ENCODE measurements at regions of chr6 and their contacts with region 1.

Region 1: DNA sequence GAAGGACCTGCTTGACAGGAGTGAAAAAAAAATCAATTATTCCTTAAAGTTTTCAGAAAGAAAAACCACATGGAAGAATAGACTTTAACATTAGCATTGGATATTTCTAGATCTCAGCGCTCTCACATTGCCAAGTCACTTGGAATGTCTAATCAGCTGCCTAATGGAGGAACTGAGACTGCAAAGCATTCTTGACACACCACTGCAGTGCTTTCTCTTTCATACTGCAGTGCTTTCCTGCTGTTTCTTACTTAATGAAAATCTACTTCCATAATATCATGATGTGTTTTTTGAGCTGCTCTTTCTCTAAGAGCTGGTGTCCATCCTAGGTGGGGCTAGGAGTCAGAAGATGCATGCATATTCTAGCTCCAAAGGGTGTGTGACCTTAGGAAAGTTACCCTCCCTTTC is 20.4 kb upstream of the MCM3 start:
- DNase-seq: no peak
- H3K4me3 Mint-ChIP-seq: no peak overlapping the region
- H3K27ac Mint-ChIP-seq: peak overlapping the region; percentile 75
- H3K4me1 Mint-ChIP-seq: peaks cover 42% of the 10 kb centered on the region
- H3K27me3 Mint-ChIP-seq: no peaks in the 10 kb centered on the region
- CTCF ChIP-seq: no peak

Region 2: DNA sequence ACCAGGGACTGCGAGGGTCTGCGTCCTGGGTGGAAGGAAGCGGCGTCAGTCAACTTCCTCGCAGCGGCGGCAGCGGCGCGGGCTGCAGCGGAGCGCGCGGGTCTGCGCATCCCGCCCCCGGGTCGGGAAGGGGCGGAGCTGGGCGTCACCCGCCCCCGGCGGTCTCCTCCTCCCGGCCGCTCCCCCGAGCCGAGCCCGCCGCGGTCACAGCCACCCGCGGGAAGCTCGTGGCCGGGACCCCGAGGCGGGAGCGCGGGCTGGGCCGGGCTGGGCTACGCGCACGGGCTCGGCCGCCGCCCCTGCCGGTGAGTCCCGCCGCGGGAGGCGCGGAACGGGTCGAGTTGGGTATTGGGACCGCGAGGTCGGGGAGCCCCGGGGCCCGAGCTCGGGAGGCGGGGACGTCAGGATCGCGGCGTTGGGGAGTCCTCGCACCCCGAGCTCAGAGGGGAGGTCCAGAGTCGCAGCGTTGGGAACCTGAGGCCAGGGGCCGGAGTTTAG is 57.0 kb after region 1 on chr6 and contains the start of gene PAQR8:
- CTCF ChIA-PET with region 1: interaction called, 3 read pairs
- intact Hi-C with region 1: loop called (anchors 5 kb)
- DNase-seq: peak; percentile 79
- H3K4me3 Mint-ChIP-seq: peak within 1 kb of the TSS; percentile 100
- H3K27ac Mint-ChIP-seq: peak within 1 kb of the TSS; percentile 95
- H3K4me1 Mint-ChIP-seq: peaks cover 34% of the 10 kb centered on the region
- H3K27me3 Mint-ChIP-seq: no peaks in the 10 kb centered on the region
- CTCF ChIP-seq: no peak
- total RNA-seq, gene PAQR8: 16.1 and 16.3 TPM in 2 replicates

Region 3: DNA sequence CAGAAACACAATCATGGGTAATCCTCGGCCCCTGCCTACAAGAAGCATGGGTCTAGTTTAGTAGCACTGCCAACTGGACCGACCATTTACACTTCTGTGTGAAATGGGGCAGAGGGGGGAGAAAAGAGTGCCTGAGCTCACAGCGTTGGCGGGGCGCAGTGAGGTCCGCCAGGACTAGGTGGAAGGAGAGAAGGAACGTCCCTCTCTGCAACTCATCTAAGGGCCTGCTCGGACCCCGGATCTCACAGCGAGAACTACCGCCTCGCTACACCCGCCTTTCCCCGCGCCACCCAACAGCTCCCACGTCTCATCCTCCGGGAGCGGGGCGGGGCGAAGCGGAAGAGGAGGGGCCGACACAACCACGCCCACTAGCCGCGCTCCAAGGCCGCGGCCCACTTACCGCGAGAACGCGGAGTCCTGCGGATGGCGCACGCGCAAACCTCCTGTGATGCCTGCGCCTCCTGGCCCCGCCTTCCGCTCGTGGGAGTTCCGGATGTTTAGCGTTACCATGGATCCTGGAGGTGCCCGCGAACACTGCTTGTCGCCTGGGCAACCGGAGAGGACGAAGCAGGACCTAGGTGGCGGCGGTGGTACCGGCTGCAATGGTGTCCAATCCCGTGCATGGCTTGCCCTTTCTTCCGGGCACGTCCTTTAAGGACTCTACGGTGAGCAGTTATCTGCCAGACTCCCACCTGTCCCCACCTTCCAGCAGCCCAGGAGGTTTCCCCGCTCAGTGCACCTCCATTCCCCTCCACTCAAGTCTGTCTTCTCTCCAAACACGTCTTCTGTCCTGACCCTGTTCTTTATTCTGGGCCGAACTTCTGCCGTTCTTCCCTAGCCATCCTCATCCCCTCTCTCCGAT is 115.1 kb after region 1 on chr6 and contains the start of gene EFHC1:
- CTCF ChIA-PET with region 1: no interaction called
- intact Hi-C with region 1: no loop called
- DNase-seq: peak; percentile 98
- H3K4me3 Mint-ChIP-seq: no peak within 1 kb of the TSS
- H3K27ac Mint-ChIP-seq: no peak within 1 kb of the TSS
- H3K4me1 Mint-ChIP-seq: peaks cover 39% of the 10 kb centered on the region
- H3K27me3 Mint-ChIP-seq: no peaks in the 10 kb centered on the region
- CTCF ChIP-seq: no peak
- total RNA-seq, gene EFHC1: 18.1 and 25.6 TPM in 2 replicates

Region 4: DNA sequence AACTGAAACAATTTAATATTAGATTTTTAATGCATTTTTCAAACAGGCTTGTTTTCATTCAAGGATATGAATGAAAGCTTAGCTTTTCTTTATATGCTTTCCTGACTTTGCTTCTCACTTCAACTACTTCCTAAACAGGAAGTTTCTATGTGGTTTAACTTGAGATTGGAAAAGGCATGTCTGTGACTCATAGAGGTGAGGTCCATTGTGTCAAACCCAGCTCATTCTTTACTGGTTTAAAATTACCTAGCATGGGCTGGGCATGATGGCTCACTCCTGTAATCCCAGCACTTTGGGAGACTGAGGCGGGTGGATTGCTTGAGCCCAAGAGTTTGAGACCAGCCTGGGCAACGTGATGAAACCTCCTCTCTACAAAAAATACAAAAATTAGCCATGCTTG is 149.6 kb after region 1 on chr6:
- CTCF ChIA-PET with region 1: no interaction called
- intact Hi-C with region 1: no loop called
- DNase-seq: peak; percentile 51
- H3K4me3 Mint-ChIP-seq: no peak overlapping the region
- H3K27ac Mint-ChIP-seq: peak overlapping the region; percentile 67
- H3K4me1 Mint-ChIP-seq: peaks cover 29% of the 10 kb centered on the region
- H3K27me3 Mint-ChIP-seq: no peaks in the 10 kb centered on the region
- CTCF ChIP-seq: no peak